ENCODE measurements at regions of chr12 and their contacts with region 1.

Region 1: GRCh38 chr12:52327052-52327829 is 6.0 kb upstream of the KRT83 start:
- DNase-seq: peak; percentile 72
- H3K4me3 ChIP-seq: no peak overlapping the region
- H3K27ac ChIP-seq: no peak overlapping the region
- H3K27me3 ChIP-seq: peaks cover 38% of the 10 kb centered on the region
- CTCF ChIP-seq: peak; percentile 94

Region 2: GRCh38 chr12:52307836-52308805 is 19.1 kb before region 1 on chr12:
- CTCF ChIA-PET with region 1: interaction called, 24 read pairs
- POLR2A ChIA-PET with region 1: interaction called, 3 read pairs
- DNase-seq: no peak
- H3K4me3 ChIP-seq: peak overlapping the region; percentile 54
- H3K27ac ChIP-seq: no peak overlapping the region
- H3K27me3 ChIP-seq: peaks cover 53% of the 10 kb centered on the region
- CTCF ChIP-seq: no peak

Region 3: DNA sequence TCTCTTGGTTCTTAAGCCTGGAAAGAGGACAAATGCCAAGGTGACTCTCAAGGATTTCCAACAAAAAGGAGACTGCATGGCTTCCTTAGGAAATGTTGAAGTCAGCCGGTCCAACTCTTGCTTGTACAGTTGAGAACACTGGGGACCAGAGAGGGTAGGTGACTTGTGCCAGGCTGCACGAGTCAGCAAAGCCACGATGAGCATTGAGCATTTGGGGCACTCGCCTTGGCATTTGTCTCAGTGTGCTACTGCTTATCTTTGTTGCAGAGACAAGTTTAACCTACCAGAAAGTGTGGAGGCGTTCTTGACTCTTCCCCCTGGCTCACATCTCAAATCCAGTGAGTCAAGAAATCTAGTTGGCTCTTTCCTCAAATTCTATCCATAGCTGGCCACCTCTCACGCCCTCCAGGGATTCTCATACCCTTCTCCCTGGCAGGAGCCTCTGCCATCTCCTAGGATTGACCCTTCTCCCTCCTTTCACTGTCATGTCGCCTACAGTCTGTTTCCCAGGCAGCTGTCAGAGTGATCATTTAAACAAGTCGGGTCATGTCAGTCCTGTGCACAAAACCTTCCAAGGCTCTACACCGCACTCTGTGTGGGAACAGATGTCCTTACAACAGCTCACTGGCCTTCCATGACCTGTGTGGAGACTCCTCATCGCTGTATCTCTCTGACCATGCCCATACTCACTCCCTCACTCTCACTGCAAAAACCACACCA is 11.2 kb after region 1 on chr12:
- CTCF ChIA-PET with region 1: interaction called, 20 read pairs
- POLR2A ChIA-PET with region 1: no interaction called
- DNase-seq: no peak
- H3K4me3 ChIP-seq: no peak overlapping the region
- H3K27ac ChIP-seq: no peak overlapping the region
- H3K27me3 ChIP-seq: peaks cover 30% of the 10 kb centered on the region
- CTCF ChIP-seq: no peak

Region 4: DNA sequence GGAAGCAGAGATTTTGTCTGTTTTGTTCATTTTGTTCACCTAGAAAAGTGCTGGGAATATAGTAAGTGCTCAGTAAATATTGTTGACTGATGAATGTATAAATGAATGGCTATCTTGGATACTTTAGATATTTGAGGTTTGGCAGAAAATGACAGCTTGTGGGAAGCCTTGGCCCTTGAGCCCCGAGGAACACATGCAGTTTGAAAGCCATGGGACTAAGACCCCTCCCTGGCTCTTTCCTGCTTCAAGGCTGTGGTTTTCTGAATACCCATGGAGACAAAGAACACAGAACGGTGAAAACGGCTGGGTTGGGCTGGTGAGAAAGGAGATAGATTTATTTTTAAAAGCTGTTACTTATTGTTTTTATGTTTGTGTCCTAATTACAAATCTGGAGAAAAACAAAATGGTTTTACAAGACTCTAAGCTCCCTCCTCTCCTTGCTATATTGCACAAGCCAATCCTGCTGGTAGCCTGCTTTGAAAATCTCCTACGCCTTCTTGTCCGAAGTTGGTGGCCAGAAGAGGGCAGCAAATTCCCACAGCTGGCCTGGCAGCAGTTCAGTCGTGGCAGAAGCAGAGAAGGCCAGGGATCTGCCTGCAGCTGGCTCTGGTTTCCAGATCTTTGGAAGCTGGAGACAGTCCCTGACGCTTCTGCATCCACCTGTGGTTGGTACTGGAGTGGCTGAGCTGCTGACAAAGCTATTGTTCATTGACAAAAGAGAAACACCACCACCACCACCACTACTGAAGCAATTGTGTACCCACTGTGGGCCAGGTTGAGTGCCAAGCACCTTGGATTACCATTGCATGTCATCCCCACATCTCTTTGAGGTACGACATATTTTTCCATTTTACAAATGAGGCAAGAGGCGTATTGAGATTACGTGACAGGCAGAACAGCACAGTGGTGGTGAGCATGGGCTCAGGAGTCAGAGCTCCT is 45.2 kb after region 1 on chr12:
- CTCF ChIA-PET with region 1: interaction called, 12 read pairs
- POLR2A ChIA-PET with region 1: no interaction called
- DNase-seq: peak; percentile 72
- H3K4me3 ChIP-seq: no peak overlapping the region
- H3K27ac ChIP-seq: no peak overlapping the region
- H3K27me3 ChIP-seq: peaks cover 35% of the 10 kb centered on the region
- CTCF ChIP-seq: peak; percentile 89

Region 5: GRCh38 chr12:52423661-52424500 is 96.6 kb after region 1 on chr12:
- CTCF ChIA-PET with region 1: no interaction called
- POLR2A ChIA-PET with region 1: no interaction called
- DNase-seq: no peak
- H3K4me3 ChIP-seq: no peak overlapping the region
- H3K27ac ChIP-seq: no peak overlapping the region
- H3K27me3 ChIP-seq: peaks cover 25% of the 10 kb centered on the region
- CTCF ChIP-seq: no peak

Measured in AG04450 (cell line).